Right ventricle myocardium superior (tissue), 1 donor: ENCODE measurements at regions of chr7 and their contacts with region 1.

Region 1: DNA sequence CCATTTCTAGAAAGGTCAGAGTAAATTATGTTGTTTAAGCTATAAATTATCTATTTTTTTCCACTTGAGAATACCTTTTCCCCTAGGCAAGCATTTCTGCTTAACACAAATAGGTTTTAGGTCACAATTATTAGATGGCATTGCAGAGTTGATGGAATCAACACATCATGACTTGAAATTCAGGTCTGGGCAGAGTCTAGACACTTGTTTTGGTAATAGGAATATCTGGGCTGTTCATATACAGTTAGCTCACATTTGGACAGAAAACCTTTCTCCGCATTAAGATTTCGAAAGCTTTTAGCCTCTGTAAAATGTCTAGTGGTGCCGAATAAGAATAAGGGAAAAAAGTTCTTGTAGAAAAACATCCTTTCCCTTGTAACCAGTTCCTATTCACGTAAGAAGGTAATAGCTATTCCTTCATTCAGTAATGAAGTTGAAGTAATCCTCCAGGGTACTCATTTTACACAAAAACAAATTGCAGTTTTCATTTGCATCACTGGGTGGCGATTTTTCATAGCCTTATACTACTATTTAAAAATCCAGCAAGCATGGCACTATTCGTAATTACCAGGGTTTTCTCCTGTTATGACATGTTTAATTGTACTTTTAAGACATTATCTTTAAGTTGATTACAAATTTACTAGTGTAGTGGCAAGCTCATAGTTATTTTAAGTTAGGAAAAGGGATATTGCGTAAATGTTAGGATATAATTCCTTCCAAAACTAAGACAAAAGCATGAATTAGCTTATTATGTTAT is 37.0 kb downstream of the RPA3 start:
- DNase-seq: no peak
- ATAC-seq: peak; percentile 89

Region 2: DNA sequence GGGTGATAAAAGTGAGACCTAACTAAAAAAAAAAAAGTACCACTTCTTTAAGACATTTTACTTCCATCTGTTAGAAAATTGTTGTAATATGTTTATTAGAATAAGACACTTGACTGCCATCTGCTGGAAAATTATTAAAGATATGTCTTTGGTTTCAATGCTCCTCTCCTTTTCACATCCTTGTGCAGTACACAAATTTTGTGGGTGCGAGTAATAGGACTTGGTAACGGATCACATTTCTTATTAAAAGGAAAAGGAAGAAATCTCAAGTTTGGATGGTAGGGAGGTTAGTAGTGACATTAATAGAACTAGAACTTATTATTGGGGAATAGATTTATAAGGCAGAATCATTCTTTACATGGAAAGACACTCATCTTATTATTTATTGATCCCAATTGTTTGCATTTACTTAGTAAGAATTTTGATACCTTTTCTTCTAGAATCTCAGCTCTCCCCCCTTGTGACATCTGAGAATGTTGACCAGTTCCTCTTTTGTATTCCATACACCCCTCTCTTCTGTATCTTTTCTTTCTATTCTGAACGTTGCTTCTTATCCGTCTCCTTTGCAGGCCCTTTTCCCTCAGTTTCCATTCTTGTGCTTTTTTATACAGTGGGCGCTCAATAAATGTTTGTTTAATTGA is 80.1 kb after region 1 on chr7:
- intact Hi-C with region 1: loop called (anchors 5 kb)
- DNase-seq: no peak
- ATAC-seq: peak; percentile 74